Activated CD8-positive, alpha-beta T cell treated with anti-CD3 and anti-CD28 coated beads, Interleukin-2, amount 10 ng/mL, durations not matched to agents 7 days and 5 days (primary cell): ENCODE measurements at regions of chr5 and their contacts with region 1.

Region 1: GRCh38 chr5:177403792-177404640 is 3.6 kb upstream of the PFN3 start:
- DNase-seq: peak; percentile 89
- ATAC-seq: peak; percentile 92
- H3K4me3 Mint-ChIP-seq: peak overlapping the region; percentile 78
- H3K27ac Mint-ChIP-seq: peak overlapping the region; percentile 74
- H3K4me1 Mint-ChIP-seq: peaks cover 48% of the 10 kb centered on the region
- H3K27me3 Mint-ChIP-seq: peaks cover 21% of the 10 kb centered on the region

Region 2: GRCh38 chr5:177133091-177133852 is 270.7 kb before region 1 on chr5 and contains the start of gene NSD1:
- CTCF ChIA-PET with region 1: no interaction called
- POLR2A ChIA-PET with region 1: no interaction called
- DNase-seq: peak; percentile 91
- ATAC-seq: peak; percentile 71
- H3K4me3 Mint-ChIP-seq: peak within 1 kb of the TSS; percentile 92
- H3K27ac Mint-ChIP-seq: peak within 1 kb of the TSS; percentile 89
- H3K4me1 Mint-ChIP-seq: peaks cover 51% of the 10 kb centered on the region
- H3K27me3 Mint-ChIP-seq: no peaks in the 10 kb centered on the region
- total RNA-seq, gene NSD1: 91.8 to 98.4 TPM

Region 3: DNA sequence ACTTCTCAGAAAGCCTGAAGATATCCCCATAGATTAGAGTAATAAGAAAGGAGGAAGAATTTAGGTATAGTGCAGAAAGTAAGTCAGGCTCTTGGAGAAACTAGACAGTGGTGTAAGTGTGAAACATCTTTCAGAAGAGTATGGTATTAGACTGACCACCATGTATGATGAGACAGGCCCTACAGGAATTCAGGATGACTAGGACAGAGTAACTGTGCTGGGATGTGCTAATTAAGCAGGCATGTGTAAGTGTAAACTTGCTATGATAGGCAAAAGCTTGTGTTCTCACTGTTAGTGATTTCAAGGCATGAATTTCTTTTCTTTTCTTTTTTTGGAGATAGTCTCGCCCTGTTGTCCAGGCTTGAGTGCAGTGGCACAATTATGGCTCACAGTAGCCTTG is 171.3 kb before region 1 on chr5:
- CTCF ChIA-PET with region 1: no interaction called
- POLR2A ChIA-PET with region 1: no interaction called
- DNase-seq: no peak
- ATAC-seq: no peak
- H3K4me3 Mint-ChIP-seq: no peak overlapping the region
- H3K27ac Mint-ChIP-seq: no peak overlapping the region
- H3K4me1 Mint-ChIP-seq: no peaks in the 10 kb centered on the region
- H3K27me3 Mint-ChIP-seq: no peaks in the 10 kb centered on the region

Region 4: GRCh38 chr5:177290816-177291596 is 113.0 kb before region 1 on chr5:
- CTCF ChIA-PET with region 1: no interaction called
- POLR2A ChIA-PET with region 1: no interaction called
- DNase-seq: no peak
- ATAC-seq: no peak
- H3K4me3 Mint-ChIP-seq: no peak overlapping the region
- H3K27ac Mint-ChIP-seq: no peak overlapping the region
- H3K4me1 Mint-ChIP-seq: peaks cover 21% of the 10 kb centered on the region
- H3K27me3 Mint-ChIP-seq: no peaks in the 10 kb centered on the region

Region 5: DNA sequence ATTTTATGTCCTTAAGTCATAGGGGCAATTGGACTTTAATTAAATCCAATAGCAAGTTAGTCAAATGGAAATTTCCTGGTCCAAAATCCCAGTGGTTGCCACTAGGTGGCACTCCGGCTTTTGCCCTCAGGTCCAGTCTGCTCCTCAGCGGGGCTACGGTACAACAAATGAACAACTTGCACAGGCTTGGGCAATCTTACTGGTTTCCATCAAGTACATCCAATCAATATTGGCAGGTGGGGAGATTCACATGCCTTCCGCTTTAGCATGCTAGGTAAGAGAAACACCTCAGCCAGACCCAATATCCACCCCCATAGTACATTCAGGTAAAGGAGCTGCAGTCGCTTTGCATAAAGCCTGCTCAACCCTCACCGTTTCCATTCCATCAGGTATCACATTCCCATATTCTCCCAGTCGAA is 86.0 kb before region 1 on chr5:
- CTCF ChIA-PET with region 1: interaction called, 24 read pairs
- POLR2A ChIA-PET with region 1: no interaction called
- DNase-seq: peak; percentile 84
- ATAC-seq: peak; percentile 67
- H3K4me3 Mint-ChIP-seq: no peak overlapping the region
- H3K27ac Mint-ChIP-seq: no peak overlapping the region
- H3K4me1 Mint-ChIP-seq: peaks cover 44% of the 10 kb centered on the region
- H3K27me3 Mint-ChIP-seq: no peaks in the 10 kb centered on the region

Region 6: DNA sequence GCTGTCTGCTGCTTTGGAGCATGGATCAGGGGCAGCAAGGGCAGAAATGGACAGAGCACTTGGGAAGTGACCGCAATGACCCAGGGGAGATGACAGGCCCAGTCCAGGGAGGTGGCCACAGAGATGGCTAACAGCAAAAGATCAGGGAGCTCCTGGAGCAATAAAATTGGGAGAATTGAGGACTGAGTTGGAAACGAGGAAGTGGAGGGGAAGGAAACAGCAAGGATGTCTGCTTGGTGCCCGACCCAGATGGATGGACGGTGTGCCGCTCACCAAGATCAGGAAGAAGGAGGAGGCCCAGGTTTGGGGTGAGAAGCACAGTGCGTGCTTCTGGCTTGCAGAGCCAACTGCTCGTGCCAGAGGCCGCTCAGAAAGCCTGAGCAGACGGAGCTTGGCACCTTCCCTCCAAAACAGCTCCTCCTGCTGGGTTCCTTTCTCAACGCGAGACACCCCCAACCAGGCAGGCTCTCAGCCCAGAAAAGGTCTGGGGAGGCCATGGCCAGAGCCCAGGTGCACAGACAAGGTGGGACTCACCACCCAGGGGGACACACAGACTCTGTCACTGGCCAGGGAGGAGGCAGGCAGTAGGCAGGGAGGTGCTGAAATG is 21.5 kb before region 1 on chr5:
- CTCF ChIA-PET with region 1: interaction called, 16 read pairs
- POLR2A ChIA-PET with region 1: interaction called, 3 read pairs
- DNase-seq: peak; percentile 44
- ATAC-seq: peak; percentile 33
- H3K4me3 Mint-ChIP-seq: no peak overlapping the region
- H3K27ac Mint-ChIP-seq: peak overlapping the region; percentile 41
- H3K4me1 Mint-ChIP-seq: peaks cover 56% of the 10 kb centered on the region
- H3K27me3 Mint-ChIP-seq: peaks cover 3% of the 10 kb centered on the region

Region 7: GRCh38 chr5:177431317-177432142 is 27.5 kb after region 1 on chr5:
- CTCF ChIA-PET with region 1: interaction called, 252 read pairs
- POLR2A ChIA-PET with region 1: interaction called, 32 read pairs
- DNase-seq: peak; percentile 90
- ATAC-seq: peak; percentile 59
- H3K4me3 Mint-ChIP-seq: peak overlapping the region; percentile 97
- H3K27ac Mint-ChIP-seq: peak overlapping the region; percentile 93
- H3K4me1 Mint-ChIP-seq: peaks cover 76% of the 10 kb centered on the region
- H3K27me3 Mint-ChIP-seq: no peaks in the 10 kb centered on the region

Region 8: GRCh38 chr5:177446200-177447065 is 42.4 kb after region 1 on chr5 and contains the start of gene PRR7:
- CTCF ChIA-PET with region 1: interaction called, 337 read pairs
- POLR2A ChIA-PET with region 1: interaction called, 26 read pairs
- DNase-seq: peak; percentile 79
- ATAC-seq: peak; percentile 74
- H3K4me3 Mint-ChIP-seq: peak within 1 kb of the TSS; percentile 70
- H3K27ac Mint-ChIP-seq: peak within 1 kb of the TSS; percentile 65
- H3K4me1 Mint-ChIP-seq: peaks cover 43% of the 10 kb centered on the region
- H3K27me3 Mint-ChIP-seq: peaks cover 6% of the 10 kb centered on the region
- total RNA-seq, gene PRR7: 9.8 to 11.6 TPM

Region 9: GRCh38 chr5:177473461-177474001 is 69.5 kb after region 1 on chr5 and contains the start of gene DBN1:
- CTCF ChIA-PET with region 1: interaction called, 24 read pairs
- POLR2A ChIA-PET with region 1: interaction called, 3 read pairs
- DNase-seq: peak; percentile 51
- ATAC-seq: peak; percentile 27
- H3K4me3 Mint-ChIP-seq: peak within 1 kb of the TSS; percentile 80
- H3K27ac Mint-ChIP-seq: peak within 1 kb of the TSS; percentile 83
- H3K4me1 Mint-ChIP-seq: peaks cover 76% of the 10 kb centered on the region
- H3K27me3 Mint-ChIP-seq: peaks cover 4% of the 10 kb centered on the region
- total RNA-seq, gene DBN1: 92.9 to 104 TPM

Region 10: GRCh38 chr5:177509381-177509951 is 105.5 kb after region 1 on chr5 and contains the start of gene DOK3:
- CTCF ChIA-PET with region 1: interaction called, 23 read pairs
- POLR2A ChIA-PET with region 1: no interaction called
- DNase-seq: no peak
- ATAC-seq: no peak
- H3K4me3 Mint-ChIP-seq: no peak within 1 kb of the TSS
- H3K27ac Mint-ChIP-seq: peak within 1 kb of the TSS; percentile 63
- H3K4me1 Mint-ChIP-seq: peaks cover 12% of the 10 kb centered on the region
- H3K27me3 Mint-ChIP-seq: no peaks in the 10 kb centered on the region
- total RNA-seq, gene DOK3: 7.3 to 7.8 TPM

Region 11: GRCh38 chr5:177620560-177620959 is 216.5 kb after region 1 on chr5:
- CTCF ChIA-PET with region 1: no interaction called
- POLR2A ChIA-PET with region 1: no interaction called
- DNase-seq: no peak
- ATAC-seq: no peak
- H3K4me3 Mint-ChIP-seq: no peak overlapping the region
- H3K27ac Mint-ChIP-seq: no peak overlapping the region
- H3K4me1 Mint-ChIP-seq: no peaks in the 10 kb centered on the region
- H3K27me3 Mint-ChIP-seq: no peaks in the 10 kb centered on the region